RWPE1 (cell line): ENCODE measurements at regions of chr3 and their contacts with region 1.

Region 1: GRCh38 chr3:126084768-126085180 is 850 bp upstream of the SLC41A3 start:
- DNase-seq: no peak
- H3K27ac ChIP-seq: no peak overlapping the region
- CTCF ChIP-seq: no peak

Region 2: GRCh38 chr3:126170073-126170777 is 85.5 kb after region 1 on chr3:
- CTCF ChIA-PET with region 1: no interaction called
- POLR2A ChIA-PET with region 1: interaction called, 14 read pairs
- DNase-seq: no peak
- H3K27ac ChIP-seq: no peak overlapping the region
- CTCF ChIP-seq: no peak